T-cell (primary cell): ENCODE measurements at regions of chr1 and their contacts with region 1.

Region 1: DNA sequence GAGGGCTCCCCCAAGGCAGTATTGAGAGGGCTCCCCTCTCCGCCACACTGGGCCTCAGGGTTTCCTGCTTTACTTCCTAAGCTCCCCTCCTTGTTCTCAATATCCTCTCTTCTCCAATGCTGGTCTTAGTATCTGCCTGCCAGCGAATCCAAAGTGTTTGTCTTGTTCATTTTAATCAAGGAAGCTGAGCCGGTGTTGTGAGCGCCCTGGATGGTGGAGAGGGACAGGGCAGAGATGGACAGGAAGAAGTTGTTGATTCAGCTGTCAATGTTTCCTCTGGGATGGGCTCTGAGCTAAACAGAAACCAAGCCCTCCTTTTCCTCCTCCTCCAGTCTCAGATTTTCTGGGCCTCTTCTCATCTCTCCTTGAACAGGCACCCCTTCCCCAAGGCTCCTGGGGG is 5.4 kb downstream of the OLFML3 start:
- DNase-seq: no peak
- ATAC-seq: no peak
- H3K4me3 ChIP-seq: no peak overlapping the region
- H3K4me3 Mint-ChIP-seq: no peak overlapping the region
- H3K27ac ChIP-seq: no peak overlapping the region
- H3K27ac Mint-ChIP-seq: no peak overlapping the region
- H3K4me1 ChIP-seq: no peaks in the 10 kb centered on the region
- H3K4me1 Mint-ChIP-seq: peaks cover 0 to 7% (median 3%) of the 10 kb centered on the region in 3 donors
- H3K27me3 ChIP-seq: no peaks in the 10 kb centered on the region
- H3K27me3 Mint-ChIP-seq: no peaks in the 10 kb centered on the region

Region 2: DNA sequence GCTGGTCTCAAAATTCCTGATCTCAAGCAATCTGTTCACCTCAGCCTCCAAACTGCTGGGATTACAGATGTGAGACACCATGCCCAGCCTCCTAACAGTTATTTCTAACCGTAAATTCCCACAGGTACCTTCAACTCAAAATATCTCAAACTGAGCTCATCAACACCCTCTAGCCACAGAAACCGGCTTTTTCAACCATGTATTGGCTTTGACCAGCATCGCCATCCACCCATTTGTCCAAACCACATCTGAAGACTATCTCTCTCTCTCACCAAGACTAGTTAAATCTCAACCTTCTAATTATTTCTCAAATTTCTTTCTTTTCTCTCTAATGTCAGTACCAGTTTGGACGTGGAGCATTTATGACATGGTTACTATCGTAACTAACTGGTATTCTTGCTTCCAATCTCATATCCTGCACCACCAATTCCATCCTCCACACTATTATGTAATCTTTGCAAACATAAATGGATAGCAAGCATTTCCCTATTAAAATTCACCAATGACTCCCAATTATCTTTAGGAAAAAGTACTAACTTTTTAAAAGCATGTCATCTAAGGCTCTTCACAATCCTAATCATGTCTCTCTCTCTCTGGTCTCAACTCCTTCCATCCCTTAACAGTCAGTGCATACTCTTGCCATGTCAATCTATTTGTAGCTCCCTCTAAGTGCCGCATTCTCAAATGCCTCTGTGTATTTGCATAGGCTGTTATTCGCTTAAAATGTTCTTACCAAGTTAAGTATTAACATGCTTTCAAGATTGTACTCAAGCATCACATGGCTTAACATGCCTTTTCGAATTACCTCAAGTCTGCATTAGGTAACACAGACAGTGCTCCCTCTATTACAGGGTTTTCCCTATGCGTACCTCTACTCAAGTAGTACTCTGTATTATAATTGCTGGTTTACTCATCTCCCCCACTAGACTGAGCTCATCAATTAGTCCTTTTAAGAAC is 190.6 kb before region 1 on chr1:
- CTCF ChIA-PET with region 1: interaction called in 1 of 2 experiments, 11 read pairs
- POLR2A ChIA-PET with region 1: no interaction called
- DNase-seq: no peak
- ATAC-seq: no peak
- H3K4me3 ChIP-seq: no peak overlapping the region
- H3K4me3 Mint-ChIP-seq: peak overlapping the region in 1 of 3 donors; percentile 5
- H3K27ac ChIP-seq: peak overlapping the region; percentile 0
- H3K27ac Mint-ChIP-seq: peak overlapping the region; percentile 67 to 83
- H3K4me1 ChIP-seq: peaks cover 11 to 19% of the 10 kb centered on the region in 2 experiments
- H3K4me1 Mint-ChIP-seq: peaks cover 73 to 78% (median 77%) of the 10 kb centered on the region in 3 donors
- H3K27me3 ChIP-seq: no peaks in the 10 kb centered on the region
- H3K27me3 Mint-ChIP-seq: no peaks in the 10 kb centered on the region

Region 3: GRCh38 chr1:113940365-113941244 is 44.1 kb before region 1 on chr1:
- CTCF ChIA-PET with region 1: no interaction called
- POLR2A ChIA-PET with region 1: no interaction called
- DNase-seq: peak in 30 of 35 experiments; percentile 11 to 73 (median 30)
- ATAC-seq: peak; percentile 64 to 72 (median 65)
- H3K4me3 ChIP-seq: peak overlapping the region in 1 of 2 donors; percentile 53
- H3K4me3 Mint-ChIP-seq: peak overlapping the region; percentile 69 to 90 (median 77)
- H3K27ac ChIP-seq: peak overlapping the region; percentile 68
- H3K27ac Mint-ChIP-seq: peak overlapping the region; percentile 92 to 98
- H3K4me1 ChIP-seq: peaks cover 50 to 52% of the 10 kb centered on the region in 2 experiments
- H3K4me1 Mint-ChIP-seq: peaks cover 80 to 82% (median 81%) of the 10 kb centered on the region in 3 donors
- H3K27me3 ChIP-seq: no peaks in the 10 kb centered on the region
- H3K27me3 Mint-ChIP-seq: no peaks in the 10 kb centered on the region

Region 4: GRCh38 chr1:113998327-113998726 is 13.6 kb after region 1 on chr1:
- CTCF ChIA-PET with region 1: no interaction called
- POLR2A ChIA-PET with region 1: no interaction called
- DNase-seq: no peak
- ATAC-seq: no peak
- H3K4me3 ChIP-seq: no peak overlapping the region
- H3K4me3 Mint-ChIP-seq: no peak overlapping the region
- H3K27ac ChIP-seq: no peak overlapping the region
- H3K27ac Mint-ChIP-seq: no peak overlapping the region
- H3K4me1 ChIP-seq: no peaks in the 10 kb centered on the region
- H3K4me1 Mint-ChIP-seq: peaks cover 2 to 9% (median 6%) of the 10 kb centered on the region in 3 donors
- H3K27me3 ChIP-seq: peaks cover 0 to 20% of the 10 kb centered on the region in 2 experiments
- H3K27me3 Mint-ChIP-seq: peaks cover 4 to 7% of the 10 kb centered on the region in 2 donors